A549 (cell line): ENCODE measurements at regions of chr20 and their contacts with region 1.

Region 1: DNA sequence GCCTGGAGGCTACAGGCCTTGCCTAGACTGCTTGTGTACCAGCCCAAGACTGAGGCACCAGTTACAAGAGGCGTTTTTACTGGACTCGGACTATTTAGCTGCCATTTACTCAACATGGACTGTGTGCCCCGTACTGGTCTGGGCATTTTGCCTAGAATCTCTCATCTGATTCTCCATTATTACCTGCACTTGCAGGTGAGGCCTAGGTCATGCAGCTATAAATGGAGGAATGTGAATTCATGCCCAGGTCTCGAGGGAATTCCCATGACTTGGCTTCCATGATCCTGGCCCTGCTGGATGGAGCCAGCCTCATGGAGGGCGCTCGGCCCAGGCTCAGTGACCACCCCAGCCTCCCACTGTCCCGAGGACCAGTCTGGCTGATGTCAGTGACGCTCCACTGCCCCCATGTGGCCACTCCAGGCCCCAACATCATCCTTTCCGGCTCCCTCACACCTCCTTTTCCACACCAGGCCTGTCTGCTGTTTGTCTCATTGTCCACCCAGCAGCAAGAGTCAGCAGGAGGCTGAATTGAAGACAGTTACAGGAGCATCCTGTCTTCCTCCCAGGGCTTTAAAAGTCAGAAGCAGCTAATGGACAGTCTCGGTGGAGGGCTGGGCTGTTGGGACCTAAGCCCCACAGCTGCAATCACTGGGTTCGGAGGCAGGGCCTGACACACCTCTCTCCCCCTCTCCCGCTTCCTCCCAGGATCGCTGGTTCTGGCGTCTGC is 8.7 kb downstream of the MMP24OS start:
- DNase-seq: peak; percentile 76 to 81
- ATAC-seq: peak; percentile 81 to 84
- H3K4me3 ChIP-seq: no peak overlapping the region
- H3K27ac ChIP-seq: peak overlapping the region; percentile 49 to 97
- H3K4me1 ChIP-seq: peaks cover 71% of the 10 kb centered on the region
- CTCF ChIP-seq: peak; percentile 89
- EP300 ChIP-seq: no peak
- POLR2A ChIP-seq: no peak
- RAD21 ChIP-seq: peak; percentile 96

Region 2: GRCh38 chr20:35092524-35093266 is 176.5 kb before region 1 on chr20 and contains the start of gene TRPC4AP:
- CTCF ChIA-PET with region 1: interaction called, 194 read pairs
- POLR2A ChIA-PET with region 1: interaction called, 3 read pairs
- DNase-seq: peak; percentile 69 to 91
- ATAC-seq: peak; percentile 94 to 95
- H3K4me3 ChIP-seq: peak within 1 kb of the TSS; percentile 61
- H3K27ac ChIP-seq: peak within 1 kb of the TSS; percentile 93 to 94
- H3K4me1 ChIP-seq: peaks cover 27% of the 10 kb centered on the region
- CTCF ChIP-seq: peak; percentile 89
- EP300 ChIP-seq: no peak
- POLR2A ChIP-seq: peak; percentile 61
- RAD21 ChIP-seq: peak; percentile 47 to 52
- polyA plus RNA-seq, gene TRPC4AP: 55.3 and 64.6 TPM in 2 replicates

Region 3: GRCh38 chr20:35166242-35166830 is 102.9 kb before region 1 on chr20:
- CTCF ChIA-PET with region 1: interaction called, 14 read pairs
- POLR2A ChIA-PET with region 1: no interaction called
- DNase-seq: no peak
- ATAC-seq: peak; percentile 43 to 61; a peak in 5 of 6 replicates
- H3K4me3 ChIP-seq: no peak overlapping the region
- H3K27ac ChIP-seq: peak overlapping the region in 1 of 2 experiments; percentile 52; a peak in 2 of 6 replicates
- H3K4me1 ChIP-seq: peaks cover 5% of the 10 kb centered on the region
- CTCF ChIP-seq: no peak
- EP300 ChIP-seq: no peak
- POLR2A ChIP-seq: no peak
- RAD21 ChIP-seq: no peak

Region 4: DNA sequence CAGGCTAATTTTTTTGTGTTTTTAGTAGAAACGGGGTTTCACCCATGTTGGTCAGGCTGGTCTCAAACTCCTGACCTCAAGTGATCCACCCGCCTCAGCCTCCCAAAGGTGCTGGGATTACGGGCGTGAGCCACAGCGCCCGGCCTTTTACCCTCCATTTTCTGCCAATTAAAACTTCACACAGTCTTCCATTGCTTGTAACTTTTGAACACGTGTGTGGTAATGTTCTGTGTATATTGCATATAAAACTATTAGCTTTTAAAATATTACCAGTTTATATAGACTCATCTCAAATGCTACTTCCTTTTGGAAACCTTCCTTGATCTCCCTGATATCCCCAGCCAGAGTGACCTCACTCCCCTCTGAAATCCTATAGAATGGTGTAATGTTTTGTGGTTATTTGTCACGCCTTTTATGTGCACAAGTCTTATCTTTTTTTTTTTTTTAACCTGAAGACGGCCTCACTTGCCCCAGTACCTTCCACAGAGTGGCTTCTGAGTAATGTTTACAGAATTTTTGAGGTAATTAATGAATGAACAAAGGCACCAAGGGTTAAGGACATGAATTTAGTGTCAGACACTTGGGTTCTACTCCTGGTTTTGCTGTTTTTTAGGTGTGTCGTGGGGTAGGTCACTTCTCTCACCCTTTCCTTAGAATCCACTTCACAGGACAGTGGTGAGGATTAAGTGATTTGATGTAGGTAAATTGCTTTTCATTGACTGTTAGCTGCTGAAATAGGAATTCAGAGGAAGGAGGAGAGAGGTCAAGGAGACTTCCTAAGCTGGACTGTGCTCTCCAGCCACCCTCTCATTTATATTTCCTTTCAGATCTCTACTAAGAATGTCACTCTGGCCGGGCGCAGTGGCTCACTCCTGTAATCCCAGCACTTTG is 53.9 kb before region 1 on chr20:
- CTCF ChIA-PET with region 1: interaction called, 83 read pairs
- POLR2A ChIA-PET with region 1: no interaction called
- DNase-seq: peak; percentile 74 to 88
- ATAC-seq: peak; percentile 88 to 93
- H3K4me3 ChIP-seq: no peak overlapping the region
- H3K27ac ChIP-seq: peak overlapping the region; percentile 76 to 91
- H3K4me1 ChIP-seq: peaks cover 63% of the 10 kb centered on the region
- CTCF ChIP-seq: no peak
- EP300 ChIP-seq: peak; percentile 54 to 92; a peak in 3 of 5 replicates
- POLR2A ChIP-seq: no peak
- RAD21 ChIP-seq: peak; percentile 22 to 28; a peak in 1 of 5 replicates

Region 5: GRCh38 chr20:35238170-35238569 is 31.0 kb before region 1 on chr20:
- CTCF ChIA-PET with region 1: interaction called, 16 read pairs
- POLR2A ChIA-PET with region 1: no interaction called
- DNase-seq: no peak
- ATAC-seq: no peak
- H3K4me3 ChIP-seq: no peak overlapping the region
- H3K27ac ChIP-seq: peak overlapping the region in 1 of 2 experiments; percentile 53; a peak in 2 of 6 replicates
- H3K4me1 ChIP-seq: peaks cover 32% of the 10 kb centered on the region
- CTCF ChIP-seq: no peak
- EP300 ChIP-seq: no peak
- POLR2A ChIP-seq: no peak
- RAD21 ChIP-seq: no peak

Region 6: GRCh38 chr20:35447082-35447789 is 178.0 kb after region 1 on chr20:
- CTCF ChIA-PET with region 1: interaction called, 12 read pairs
- POLR2A ChIA-PET with region 1: no interaction called
- DNase-seq: peak; percentile 77 to 86
- ATAC-seq: peak; percentile 95
- H3K4me3 ChIP-seq: peak overlapping the region; percentile 38
- H3K27ac ChIP-seq: peak overlapping the region; percentile 59 to 77
- H3K4me1 ChIP-seq: no peaks in the 10 kb centered on the region
- CTCF ChIP-seq: peak; percentile 84
- EP300 ChIP-seq: no peak
- POLR2A ChIP-seq: no peak
- RAD21 ChIP-seq: peak; percentile 71 to 73